Activated B cell treated with CpG ODN at 0.5 μM for 24 hours (primary cell): ENCODE measurements at regions of chr17 and their contacts with region 1.

Region 1: DNA sequence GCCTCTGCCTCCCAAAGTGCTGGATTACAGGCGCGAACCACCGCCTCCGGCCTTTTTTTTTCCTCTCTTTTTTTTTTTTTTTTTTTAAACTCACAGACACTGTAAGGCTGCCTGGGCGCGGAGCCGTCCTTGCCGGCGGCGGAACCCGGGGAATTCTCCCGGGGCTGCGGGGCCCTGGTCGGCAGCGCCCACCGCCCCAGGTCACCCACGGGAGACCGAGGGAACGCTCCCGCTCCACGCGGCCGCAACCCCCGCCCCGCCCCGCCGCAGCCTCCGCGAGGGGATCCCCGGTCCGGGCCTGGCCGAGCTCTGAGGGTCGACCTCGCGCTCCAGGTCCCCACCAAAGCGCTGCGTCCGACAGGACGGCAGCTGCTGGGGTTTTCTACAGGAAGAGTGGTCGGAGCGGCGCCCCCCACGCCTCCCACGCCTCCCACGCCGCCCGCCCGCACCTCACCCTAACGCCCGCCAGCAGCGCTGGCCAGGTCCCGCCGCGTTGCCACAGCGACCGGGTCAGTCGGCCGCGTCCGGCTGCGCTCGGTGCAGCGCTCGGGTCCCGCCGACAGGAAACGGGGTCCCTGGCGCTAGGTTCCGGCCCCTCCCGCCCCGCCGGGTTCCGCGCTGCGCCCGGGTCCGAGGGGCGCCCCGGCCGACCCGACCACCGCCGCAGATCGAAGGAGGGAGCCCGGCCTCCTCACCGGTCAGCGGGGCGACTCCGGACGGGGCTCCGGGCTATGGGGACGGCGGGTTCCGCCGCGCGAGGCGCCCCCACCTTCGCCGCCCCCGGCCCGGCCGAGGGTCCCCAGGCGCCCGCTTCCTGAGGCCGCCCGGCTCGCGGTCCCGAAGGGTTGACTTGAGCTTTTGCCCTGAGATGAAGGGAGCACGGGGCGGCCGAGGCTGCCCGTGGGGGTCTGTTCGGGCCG is at the start of gene CCDC57:
- DNase-seq: peak; percentile 78
- ATAC-seq: peak; percentile 73
- H3K4me3 Mint-ChIP-seq: peak within 1 kb of the TSS; percentile 84
- H3K27ac Mint-ChIP-seq: peak within 1 kb of the TSS; percentile 91
- H3K4me1 Mint-ChIP-seq: peaks cover 43% of the 10 kb centered on the region
- H3K27me3 Mint-ChIP-seq: no peaks in the 10 kb centered on the region
- CTCF ChIP-seq: no peak
- total RNA-seq, gene CCDC57: 56.6 TPM in 2 replicates

Region 2: DNA sequence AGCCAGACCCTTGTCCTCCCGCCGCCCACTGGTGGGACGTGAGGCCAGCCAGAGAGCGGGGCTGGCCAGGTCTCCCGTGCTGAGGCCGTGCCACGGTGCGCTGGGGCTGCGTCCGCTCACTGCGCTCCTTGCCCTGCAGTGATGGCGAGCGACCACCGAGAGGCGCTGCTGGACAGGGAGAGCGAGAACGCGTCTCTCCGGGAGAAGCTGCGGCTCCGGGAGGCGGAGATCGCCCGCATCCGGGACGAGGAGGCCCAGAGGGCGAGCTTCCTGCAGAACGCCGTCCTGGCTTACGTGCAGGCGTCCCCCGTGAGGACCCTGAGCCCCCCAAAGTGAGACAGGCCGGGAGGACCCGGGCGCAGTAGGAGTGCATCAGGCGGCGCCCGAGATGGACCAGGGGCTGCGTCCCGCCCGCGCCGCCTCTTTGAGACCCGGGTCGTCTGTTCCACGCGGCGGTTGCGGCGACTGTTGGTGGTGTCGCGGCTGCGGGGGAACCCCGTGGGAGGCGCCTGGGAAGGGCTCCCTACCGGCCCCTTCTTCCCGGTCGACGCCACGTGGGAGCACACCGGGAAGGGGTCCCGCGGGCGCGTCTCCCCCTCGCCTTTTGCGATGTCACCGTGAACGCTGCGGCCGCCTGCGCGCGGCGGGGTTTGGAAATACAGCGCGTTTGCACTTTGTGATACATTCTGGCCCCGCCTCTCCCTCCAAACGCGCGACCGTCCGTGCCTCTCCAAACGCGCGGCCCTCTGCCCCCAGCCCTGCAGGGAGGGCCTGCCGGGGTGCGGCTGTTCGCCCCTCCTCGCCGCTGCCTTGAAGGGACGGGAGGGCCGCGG is 181.9 kb before region 1 on chr17:
- CTCF ChIA-PET with region 1: no interaction called
- POLR2A ChIA-PET with region 1: no interaction called
- intact Hi-C with region 1: loop called (anchors 2 kb)
- DNase-seq: peak; percentile 69
- ATAC-seq: peak; percentile 84
- H3K4me3 Mint-ChIP-seq: peak overlapping the region; percentile 77
- H3K27ac Mint-ChIP-seq: no peak overlapping the region
- H3K4me1 Mint-ChIP-seq: peaks cover 14% of the 10 kb centered on the region
- H3K27me3 Mint-ChIP-seq: peaks cover 2% of the 10 kb centered on the region
- CTCF ChIP-seq: peak; percentile 73

Region 3: DNA sequence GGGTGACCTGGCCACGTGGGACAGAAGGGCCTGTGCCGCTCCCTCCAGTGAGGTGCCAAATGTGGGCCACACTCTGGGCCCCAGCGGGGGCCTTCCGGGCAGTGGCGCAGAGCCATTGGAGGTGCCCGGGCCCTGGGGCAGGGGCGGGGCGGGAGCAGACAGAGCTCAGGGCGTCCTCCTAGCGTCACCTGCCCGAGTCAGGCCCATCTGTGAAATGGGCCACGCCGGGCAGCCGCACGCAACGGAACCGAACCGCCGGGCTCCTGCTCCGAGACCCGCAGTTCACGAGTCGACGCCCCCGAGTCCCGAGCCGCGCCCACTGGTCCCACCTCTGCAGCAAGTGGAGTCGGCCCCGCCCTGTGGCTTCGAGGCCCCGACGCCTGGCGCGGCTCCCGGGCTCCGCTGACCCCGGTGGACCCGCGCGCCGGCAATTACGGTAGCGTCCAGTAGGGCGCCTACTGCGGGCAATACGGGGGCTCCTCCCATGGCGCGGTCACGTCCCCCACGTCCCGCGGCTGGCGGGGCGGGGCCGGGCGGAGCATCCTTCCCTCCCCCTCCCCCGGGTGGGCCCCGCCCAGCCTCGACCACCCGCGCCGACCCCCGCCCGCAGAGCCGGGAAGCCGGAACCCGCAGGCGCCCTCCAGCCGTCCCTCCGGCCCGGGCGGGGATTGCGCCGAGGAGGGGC is 18.2 kb after region 1 on chr17:
- CTCF ChIA-PET with region 1: no interaction called
- POLR2A ChIA-PET with region 1: interaction called, 60 read pairs
- intact Hi-C with region 1: loop called (anchors 1 kb)
- DNase-seq: peak; percentile 68
- ATAC-seq: peak; percentile 49
- H3K4me3 Mint-ChIP-seq: peak overlapping the region; percentile 78
- H3K27ac Mint-ChIP-seq: no peak overlapping the region
- H3K4me1 Mint-ChIP-seq: peaks cover 33% of the 10 kb centered on the region
- H3K27me3 Mint-ChIP-seq: no peaks in the 10 kb centered on the region
- CTCF ChIP-seq: no peak